GM12878 (cell line): ENCODE measurements at regions of chr16 and their contacts with region 1.

Region 1: GRCh38 chr16:30472328-30472942 is at the start of gene ITGAL:
- DNase-seq: peak; percentile 98
- ATAC-seq: peak; percentile 67
- H3K4me3 ChIP-seq: peak within 1 kb of the TSS; percentile 96
- H3K27ac ChIP-seq: peak within 1 kb of the TSS; percentile 90
- H3K4me1 ChIP-seq: peaks cover 40% of the 10 kb centered on the region
- H3K27me3 ChIP-seq: no peaks in the 10 kb centered on the region
- CTCF ChIP-seq: no peak
- EP300 ChIP-seq: peak; percentile 86 to 95; a peak in 3 of 4 replicates
- POLR2A ChIP-seq: peak; percentile 81
- RAD21 ChIP-seq: peak; percentile 3; the same call in 1 of the 2 replicates
- polyA plus RNA-seq, gene ITGAL: 10.7 to 12.1 TPM

Region 2: DNA sequence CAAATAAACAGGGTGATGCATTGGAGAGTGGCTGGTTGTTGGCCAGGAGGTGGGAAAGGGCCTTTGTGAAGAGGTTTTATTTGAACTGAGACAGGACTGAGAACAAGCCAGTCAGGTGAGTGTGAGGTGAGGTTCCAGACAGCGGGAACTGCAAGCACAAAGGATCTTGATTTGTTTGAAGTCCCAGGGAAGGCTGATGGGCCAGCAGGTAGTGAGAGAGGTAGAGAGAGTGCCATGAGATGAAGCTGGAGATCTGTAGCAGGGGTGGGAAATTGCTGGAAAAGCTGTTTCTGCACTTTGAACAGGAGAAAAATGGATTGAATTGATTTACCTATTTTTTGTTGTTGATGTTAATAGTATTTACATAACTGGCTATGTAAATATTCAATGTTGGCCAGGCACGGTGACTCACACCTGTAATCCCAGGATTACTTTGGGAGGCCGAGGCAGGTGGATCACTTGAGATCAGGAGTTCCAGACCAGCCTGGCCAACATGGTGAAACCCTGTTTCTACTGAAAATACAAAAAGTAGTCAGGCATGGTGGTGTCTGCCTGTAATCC is 34.9 kb before region 1 on chr16:
- CTCF ChIA-PET with region 1: interaction called, 4 read pairs
- POLR2A ChIA-PET with region 1: no interaction called
- RAD21 ChIA-PET with region 1: interaction called, 53 read pairs
- SMC1A ChIA-PET with region 1: interaction called, 12 read pairs
- in situ Hi-C with region 1: no loop called
- intact Hi-C with region 1: no loop called
- DNase-seq: no peak
- ATAC-seq: no peak
- H3K4me3 ChIP-seq: no peak overlapping the region
- H3K27ac ChIP-seq: no peak overlapping the region
- H3K4me1 ChIP-seq: peaks cover 9% of the 10 kb centered on the region
- H3K27me3 ChIP-seq: no peaks in the 10 kb centered on the region
- CTCF ChIP-seq: no peak
- EP300 ChIP-seq: no peak
- POLR2A ChIP-seq: no peak
- RAD21 ChIP-seq: no peak

Region 3: GRCh38 chr16:30526823-30527635 is 54.6 kb after region 1 on chr16:
- CTCF ChIA-PET with region 1: no interaction called
- POLR2A ChIA-PET with region 1: interaction called, 12 read pairs
- RAD21 ChIA-PET with region 1: interaction called, 7 read pairs
- SMC1A ChIA-PET with region 1: interaction called, 6 read pairs
- in situ Hi-C with region 1: no loop called
- intact Hi-C with region 1: loop called (anchors 1 kb)
- DNase-seq: peak; percentile 89
- ATAC-seq: peak; percentile 95
- H3K4me3 ChIP-seq: peak overlapping the region; percentile 91
- H3K27ac ChIP-seq: peak overlapping the region; percentile 93
- H3K4me1 ChIP-seq: peaks cover 15% of the 10 kb centered on the region
- H3K27me3 ChIP-seq: no peaks in the 10 kb centered on the region
- CTCF ChIP-seq: peak; percentile 19 to 42 (median 25); a peak in 4 of 6 replicates
- EP300 ChIP-seq: no peak
- POLR2A ChIP-seq: peak; percentile 42; the same call in 1 of the 2 replicates
- RAD21 ChIP-seq: no peak

Region 4: DNA sequence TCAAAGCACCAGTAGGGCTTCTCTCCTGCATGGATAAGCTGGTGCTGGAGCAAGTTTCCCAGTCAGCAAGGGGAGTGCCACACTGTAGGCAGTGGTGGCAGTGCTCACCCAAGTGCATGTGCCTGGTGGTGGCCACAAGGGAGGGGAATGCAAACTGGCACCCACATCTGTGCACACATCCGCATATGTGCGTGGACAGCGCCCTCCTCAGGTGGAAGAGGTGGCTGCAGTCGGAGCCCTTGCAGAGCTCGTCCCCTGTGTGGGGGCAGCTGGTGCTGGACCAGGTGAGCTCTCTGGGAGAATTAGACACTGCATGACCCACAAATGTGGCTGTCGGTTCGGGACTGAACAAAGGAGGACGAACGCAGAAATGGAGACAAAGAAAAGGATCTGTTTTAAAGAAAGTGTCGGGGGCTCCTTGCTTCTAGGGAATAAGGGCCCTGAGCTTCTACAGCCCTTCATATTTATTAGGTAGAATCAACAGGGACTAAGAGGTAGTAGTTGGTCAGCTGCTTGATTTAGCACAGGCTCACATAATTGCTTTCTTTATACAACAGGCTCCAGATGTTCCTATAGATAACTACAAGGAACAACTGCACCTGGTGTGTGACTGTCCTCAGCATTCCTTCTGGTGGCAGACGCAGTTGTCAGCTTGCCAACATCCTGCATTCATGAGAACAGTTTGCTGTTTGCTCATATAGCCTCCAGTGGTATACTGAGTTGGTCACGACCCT is 143.1 kb after region 1 on chr16:
- CTCF ChIA-PET with region 1: no interaction called
- POLR2A ChIA-PET with region 1: no interaction called
- RAD21 ChIA-PET with region 1: no interaction called
- SMC1A ChIA-PET with region 1: no interaction called
- in situ Hi-C with region 1: no loop called
- intact Hi-C with region 1: no loop called
- DNase-seq: no peak
- ATAC-seq: peak; percentile 82
- H3K4me3 ChIP-seq: no peak overlapping the region
- H3K27ac ChIP-seq: no peak overlapping the region
- H3K4me1 ChIP-seq: no peaks in the 10 kb centered on the region
- H3K27me3 ChIP-seq: no peaks in the 10 kb centered on the region
- CTCF ChIP-seq: peak; percentile 72 to 75 (median 74)
- EP300 ChIP-seq: no peak
- POLR2A ChIP-seq: no peak
- RAD21 ChIP-seq: peak; percentile 72